Lower leg skin (tissue), 4 donors: ENCODE measurements at regions of chr1 and their contacts with region 1.

Region 1: DNA sequence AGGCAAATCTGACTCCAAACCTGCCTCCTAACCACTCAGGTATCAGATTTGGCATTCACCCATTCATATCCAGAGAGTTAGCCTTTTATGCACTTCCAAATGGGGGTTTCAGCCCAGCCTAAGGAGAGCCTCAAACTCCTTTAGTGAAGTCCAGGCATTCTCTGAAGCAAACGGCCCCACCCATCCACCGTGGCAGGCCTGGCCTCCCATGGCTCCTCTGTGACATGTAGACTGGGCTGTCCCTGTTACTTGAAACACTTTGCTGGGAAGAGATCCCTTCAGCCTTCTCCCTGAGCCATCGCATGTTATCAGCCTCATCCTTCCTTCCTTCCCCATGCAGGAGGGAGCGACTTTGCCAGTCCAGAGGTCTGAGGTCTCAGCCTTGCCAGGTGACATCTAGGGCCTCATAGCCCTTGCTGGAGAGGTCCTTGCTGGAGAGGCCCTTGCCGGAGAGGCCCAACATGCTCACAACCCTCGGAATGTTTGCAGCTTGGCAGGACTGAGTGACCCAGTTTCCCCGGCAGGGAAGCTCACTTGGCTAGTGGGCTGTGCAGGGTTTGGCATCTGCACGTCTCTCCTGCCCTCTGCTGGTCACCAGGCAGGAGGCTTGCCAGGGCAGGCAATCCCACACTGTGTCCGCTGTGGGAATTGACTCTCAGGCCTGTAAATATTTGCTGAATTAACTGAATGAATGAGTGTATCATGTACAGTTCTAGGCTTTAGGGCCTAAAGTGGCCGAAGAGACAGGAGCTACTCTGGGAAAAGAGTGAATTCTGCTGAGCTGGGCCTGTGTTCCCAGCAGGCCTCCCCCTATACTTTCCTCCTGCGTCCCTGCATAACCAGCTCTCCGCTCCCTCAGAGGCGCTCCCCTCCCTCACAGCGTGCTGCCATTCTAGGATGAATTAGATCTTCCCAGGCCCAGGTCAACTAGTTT is 26.7 kb upstream of the RBM15 start:
- DNase-seq: peak; percentile 63 to 92
- H3K4me3 ChIP-seq: no peak overlapping the region
- CTCF ChIP-seq: peak in 1 of 3 donors; percentile 75
- POLR2A ChIP-seq: no peak

Region 2: DNA sequence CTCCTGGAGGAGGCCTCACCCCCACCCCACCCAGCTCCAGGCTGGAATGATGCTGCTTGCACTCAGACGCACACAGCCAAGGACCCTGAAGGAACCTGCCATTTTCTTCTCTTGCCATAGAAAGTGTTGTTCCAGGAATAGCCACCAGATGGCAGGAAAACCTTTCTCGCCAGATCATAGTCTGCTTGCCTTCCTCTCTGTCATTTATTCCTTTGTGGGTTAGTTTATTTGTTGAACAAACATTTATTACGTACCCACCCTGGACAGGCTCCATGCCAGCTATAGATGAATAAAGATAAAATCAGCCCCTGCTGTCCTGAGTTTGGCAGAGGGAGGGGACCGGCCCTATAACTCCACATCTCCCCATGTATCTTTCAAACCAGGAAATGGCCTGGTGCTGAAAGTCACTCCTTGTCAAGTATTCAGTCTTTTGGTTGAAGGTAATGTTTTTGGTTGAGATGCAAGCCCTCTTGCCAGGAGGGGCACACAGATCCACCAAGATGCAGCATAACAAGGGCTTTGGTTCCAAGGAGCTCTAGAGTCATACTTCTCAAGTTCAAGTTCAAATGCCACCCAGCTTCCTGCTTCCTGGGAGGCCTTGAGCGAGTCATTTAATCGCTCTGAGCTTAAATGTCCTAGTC is 109.3 kb before region 1 on chr1:
- intact Hi-C with region 1: loop called (anchors 2 kb)
- DNase-seq: peak in 1 of 2 donors; percentile 63
- H3K4me3 ChIP-seq: no peak overlapping the region
- CTCF ChIP-seq: peak in 1 of 3 donors; percentile 64
- POLR2A ChIP-seq: no peak